ENCODE measurements at regions of chr5 and their contacts with region 1.

Region 1: DNA sequence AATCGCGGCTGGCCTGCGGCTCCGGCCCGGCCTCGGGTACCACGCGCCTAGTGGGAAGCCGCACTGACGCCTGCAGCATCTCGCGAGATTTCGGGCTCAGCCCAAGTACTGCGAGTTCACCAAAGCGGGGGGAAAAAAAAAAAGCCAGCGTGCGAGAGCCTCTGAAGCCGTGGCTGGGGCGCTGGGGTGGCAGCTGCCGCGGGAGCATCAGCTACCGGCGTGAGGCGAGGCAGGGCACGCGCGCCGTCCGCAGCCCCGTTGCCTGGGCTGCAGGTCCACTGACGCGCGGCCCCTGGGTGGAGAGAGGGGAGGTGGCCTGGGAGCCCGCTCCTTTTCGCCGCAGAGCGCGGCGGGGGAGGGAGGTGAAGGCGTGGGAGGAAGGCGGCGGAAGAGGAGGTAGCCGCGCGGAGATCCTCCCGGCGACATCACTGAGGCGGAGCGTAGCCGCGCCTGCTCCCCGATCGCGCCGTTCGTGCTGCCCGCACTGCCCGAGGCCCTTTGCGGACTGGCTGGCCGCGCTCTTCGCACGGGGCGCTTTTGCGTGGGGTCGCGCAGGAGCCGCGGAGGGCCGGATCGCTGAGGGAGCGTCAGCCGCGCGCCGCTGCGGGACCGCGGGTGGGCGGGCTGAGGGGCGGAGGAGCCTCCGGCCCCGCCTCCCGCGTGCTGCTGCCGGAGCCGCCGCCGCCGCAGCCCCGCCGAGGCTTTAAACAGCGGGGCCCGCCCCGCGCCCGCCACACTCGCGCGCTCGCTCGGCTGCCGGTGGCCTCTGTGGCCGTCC is at the start of gene SLC12A2:
- DNase-seq: peak; percentile 98
- H3K4me3 Mint-ChIP-seq: peak within 1 kb of the TSS; percentile 94
- H3K27ac Mint-ChIP-seq: peak within 1 kb of the TSS; percentile 66
- H3K4me1 Mint-ChIP-seq: peaks cover 54% of the 10 kb centered on the region
- H3K27me3 Mint-ChIP-seq: no peaks in the 10 kb centered on the region
- CTCF ChIP-seq: no peak
- total RNA-seq, gene SLC12A2: 26.8 and 29.8 TPM in 2 replicates

Region 2: DNA sequence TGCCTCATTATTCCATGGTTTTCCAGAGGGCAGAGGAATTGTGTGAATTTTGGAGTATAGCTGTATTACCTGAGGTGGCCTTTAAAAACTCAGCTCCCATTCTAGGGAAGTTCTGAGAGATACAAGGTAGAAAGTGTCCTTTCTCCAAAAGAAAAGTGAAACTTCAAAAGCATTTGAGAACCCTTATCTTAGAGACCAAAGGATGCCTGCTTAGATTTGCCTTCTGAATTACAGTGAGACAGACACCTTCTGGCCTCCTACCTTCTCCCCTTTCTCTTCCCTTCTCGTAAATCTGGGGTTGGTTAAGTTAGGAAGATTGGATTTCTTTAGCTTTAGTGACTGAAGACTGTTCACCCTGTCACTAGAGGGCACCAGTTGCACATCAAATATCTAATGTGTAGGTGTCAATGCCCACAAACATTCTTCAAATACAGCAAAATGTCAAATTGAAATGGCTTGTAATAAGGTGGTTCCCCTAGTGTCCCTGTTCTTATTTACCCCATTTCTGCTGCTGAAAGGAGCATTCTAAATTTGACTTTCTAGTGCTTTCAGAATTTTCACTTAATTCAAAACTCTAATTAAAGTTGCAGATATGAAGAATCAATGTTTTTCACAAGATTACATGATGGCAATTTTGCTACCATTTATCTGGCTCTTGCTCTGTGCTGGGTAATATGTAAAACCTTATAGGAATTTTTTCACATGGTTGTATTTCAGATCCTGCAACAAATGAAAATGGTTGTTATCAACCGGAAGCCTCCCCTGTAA is 519.0 kb before region 1 on chr5:
- CTCF ChIA-PET with region 1: interaction called, 4 read pairs
- POLR2A ChIA-PET with region 1: no interaction called
- intact Hi-C with region 1: loop called (anchors 1 kb)
- DNase-seq: peak; percentile 89
- H3K4me3 Mint-ChIP-seq: no peak overlapping the region
- H3K27ac Mint-ChIP-seq: no peak overlapping the region
- H3K4me1 Mint-ChIP-seq: peaks cover 5% of the 10 kb centered on the region
- H3K27me3 Mint-ChIP-seq: peaks cover 10% of the 10 kb centered on the region
- CTCF ChIP-seq: peak; percentile 77

Region 3: DNA sequence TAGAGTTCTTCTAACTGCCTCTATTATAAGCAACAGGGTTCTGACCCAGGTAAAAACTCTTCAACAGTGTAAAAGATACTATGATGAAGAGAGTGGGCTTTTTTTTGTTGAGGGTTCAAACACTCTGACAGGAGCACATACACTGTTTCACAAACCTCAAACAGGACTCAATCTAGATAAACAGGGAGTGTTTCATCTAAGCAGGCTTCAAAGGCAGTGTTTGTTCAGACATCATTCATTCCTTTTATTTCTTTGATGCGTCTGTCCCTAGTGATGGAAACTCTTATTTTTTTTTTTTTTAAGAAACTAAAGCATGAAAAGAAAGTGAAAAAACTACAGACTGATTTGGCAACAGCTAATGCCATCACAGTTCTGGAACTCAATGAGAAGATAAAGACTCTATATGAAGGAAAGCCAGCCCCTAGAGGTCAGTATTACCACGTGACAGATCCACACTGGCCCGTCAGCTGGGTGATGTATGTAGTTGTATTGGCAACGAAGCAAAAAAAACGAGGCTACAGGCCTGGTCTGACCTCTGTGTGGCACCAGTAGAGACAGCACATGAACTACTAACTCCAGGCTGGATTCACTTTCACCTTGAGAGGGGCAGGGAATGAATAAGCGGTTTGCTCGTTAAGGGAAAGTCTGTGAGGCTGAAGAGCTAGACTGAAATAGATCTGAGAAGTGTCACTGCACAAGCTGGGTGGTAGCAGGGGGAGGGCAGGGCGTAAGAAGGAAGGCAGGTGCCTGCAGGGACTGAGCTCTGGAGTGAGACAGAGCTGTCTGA is 207.8 kb before region 1 on chr5:
- CTCF ChIA-PET with region 1: interaction called, 8 read pairs
- POLR2A ChIA-PET with region 1: interaction called, 16 read pairs
- intact Hi-C with region 1: loop called (anchors 1 kb)
- DNase-seq: peak; percentile 86
- H3K4me3 Mint-ChIP-seq: no peak overlapping the region
- H3K27ac Mint-ChIP-seq: peak overlapping the region; percentile 47
- H3K4me1 Mint-ChIP-seq: peaks cover 24% of the 10 kb centered on the region
- H3K27me3 Mint-ChIP-seq: no peaks in the 10 kb centered on the region
- CTCF ChIP-seq: peak; percentile 58

Region 4: DNA sequence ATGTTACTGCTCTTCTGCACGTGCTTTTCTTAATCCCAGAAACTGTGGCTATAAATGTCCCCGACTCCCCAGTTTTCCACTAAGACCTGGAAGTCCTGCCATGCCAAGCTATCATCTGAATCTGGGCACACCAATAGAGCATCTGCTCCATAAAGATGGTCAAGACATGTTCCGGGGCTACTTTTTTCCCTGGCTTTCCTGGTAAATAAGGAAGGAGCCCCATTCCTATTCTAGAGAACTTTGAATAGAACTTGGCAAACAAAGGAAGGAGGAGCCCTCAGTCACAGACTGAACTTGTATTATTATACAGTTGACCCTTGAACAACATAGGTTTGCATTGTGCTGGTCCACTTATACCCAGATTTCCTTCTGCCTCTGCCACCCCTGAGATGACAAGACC is 197.1 kb before region 1 on chr5:
- CTCF ChIA-PET with region 1: no interaction called
- POLR2A ChIA-PET with region 1: no interaction called
- intact Hi-C with region 1: no loop called
- DNase-seq: no peak
- H3K4me3 Mint-ChIP-seq: no peak overlapping the region
- H3K27ac Mint-ChIP-seq: no peak overlapping the region
- H3K4me1 Mint-ChIP-seq: no peaks in the 10 kb centered on the region
- H3K27me3 Mint-ChIP-seq: no peaks in the 10 kb centered on the region
- CTCF ChIP-seq: no peak

Region 5: DNA sequence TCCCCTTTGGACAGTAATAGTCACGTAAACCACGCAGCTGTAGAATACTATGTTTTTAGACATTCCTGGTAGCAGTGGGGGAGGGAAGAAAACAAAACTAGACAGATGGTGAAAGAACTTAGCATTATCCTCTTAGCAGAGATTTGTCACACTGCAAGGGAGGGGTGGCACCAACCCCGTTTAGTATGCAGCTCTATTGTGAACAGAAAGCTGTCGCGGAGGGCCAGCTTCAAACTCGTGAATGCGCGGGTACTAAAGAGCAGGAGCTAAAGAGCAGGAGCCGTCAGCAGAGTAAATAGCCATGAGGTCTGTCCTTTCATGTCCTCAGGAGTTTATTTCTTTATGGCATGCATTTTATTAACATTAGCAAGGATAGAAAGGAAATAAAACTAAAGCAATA is 141.6 kb before region 1 on chr5:
- CTCF ChIA-PET with region 1: no interaction called
- POLR2A ChIA-PET with region 1: no interaction called
- intact Hi-C with region 1: no loop called
- DNase-seq: no peak
- H3K4me3 Mint-ChIP-seq: no peak overlapping the region
- H3K27ac Mint-ChIP-seq: no peak overlapping the region
- H3K4me1 Mint-ChIP-seq: peaks cover 7% of the 10 kb centered on the region
- H3K27me3 Mint-ChIP-seq: no peaks in the 10 kb centered on the region
- CTCF ChIP-seq: no peak

Region 6: GRCh38 chr5:127959152-127959764 is 124.0 kb before region 1 on chr5:
- CTCF ChIA-PET with region 1: interaction called, 3 read pairs
- POLR2A ChIA-PET with region 1: interaction called, 12 read pairs
- intact Hi-C with region 1: loop called (anchors 1 kb)
- DNase-seq: peak; percentile 97
- H3K4me3 Mint-ChIP-seq: no peak overlapping the region
- H3K27ac Mint-ChIP-seq: peak overlapping the region; percentile 25
- H3K4me1 Mint-ChIP-seq: peaks cover 37% of the 10 kb centered on the region
- H3K27me3 Mint-ChIP-seq: no peaks in the 10 kb centered on the region
- CTCF ChIP-seq: no peak

Region 7: DNA sequence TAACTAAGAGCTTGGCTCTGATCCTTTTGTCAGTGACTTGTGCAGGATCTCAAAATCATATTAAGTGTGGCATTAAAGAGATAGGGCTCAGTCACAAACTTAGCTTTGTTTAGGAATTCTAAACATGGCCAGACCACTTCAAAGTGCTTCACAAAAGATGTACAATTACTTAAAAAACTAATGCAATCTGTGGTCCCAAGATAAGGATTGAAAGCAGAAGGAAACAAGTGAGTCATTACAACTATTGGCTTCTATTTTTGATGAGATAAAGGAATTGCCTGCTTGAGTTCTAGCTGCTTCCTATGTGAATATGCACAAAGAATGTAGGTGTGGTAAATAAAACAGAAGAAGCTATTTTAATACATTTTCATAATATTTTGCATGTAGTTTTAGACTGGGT is 44.6 kb before region 1 on chr5:
- CTCF ChIA-PET with region 1: interaction called, 15 read pairs
- POLR2A ChIA-PET with region 1: interaction called, 32 read pairs
- intact Hi-C with region 1: loop called (anchors 2 kb)
- DNase-seq: peak; percentile 32
- H3K4me3 Mint-ChIP-seq: no peak overlapping the region
- H3K27ac Mint-ChIP-seq: no peak overlapping the region
- H3K4me1 Mint-ChIP-seq: peaks cover 41% of the 10 kb centered on the region
- H3K27me3 Mint-ChIP-seq: no peaks in the 10 kb centered on the region
- CTCF ChIP-seq: no peak

Region 8: DNA sequence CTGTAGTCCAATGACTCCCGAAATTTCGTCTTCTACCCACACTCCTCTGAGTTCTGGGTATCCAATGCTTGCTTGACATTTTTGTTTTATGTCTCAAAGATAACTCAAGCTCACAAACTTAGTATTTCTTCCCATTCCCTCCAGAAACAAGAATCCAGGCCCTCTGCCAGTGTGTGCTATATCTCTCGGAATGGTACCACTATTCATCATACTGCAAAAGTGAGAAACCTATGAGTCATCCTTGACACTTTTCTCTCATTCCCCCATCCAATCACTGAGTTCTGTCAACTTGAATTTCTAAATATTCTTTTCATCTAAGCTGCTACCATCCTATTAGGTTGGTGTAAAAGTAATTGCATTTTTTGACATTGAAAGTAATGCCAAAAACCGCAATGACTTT is 10.1 kb after region 1 on chr5:
- CTCF ChIA-PET with region 1: interaction called, 5 read pairs
- POLR2A ChIA-PET with region 1: interaction called, 17 read pairs
- intact Hi-C with region 1: no loop called
- DNase-seq: peak; percentile 28
- H3K4me3 Mint-ChIP-seq: no peak overlapping the region
- H3K27ac Mint-ChIP-seq: no peak overlapping the region
- H3K4me1 Mint-ChIP-seq: peaks cover 12% of the 10 kb centered on the region
- H3K27me3 Mint-ChIP-seq: no peaks in the 10 kb centered on the region
- CTCF ChIP-seq: no peak

Region 9: DNA sequence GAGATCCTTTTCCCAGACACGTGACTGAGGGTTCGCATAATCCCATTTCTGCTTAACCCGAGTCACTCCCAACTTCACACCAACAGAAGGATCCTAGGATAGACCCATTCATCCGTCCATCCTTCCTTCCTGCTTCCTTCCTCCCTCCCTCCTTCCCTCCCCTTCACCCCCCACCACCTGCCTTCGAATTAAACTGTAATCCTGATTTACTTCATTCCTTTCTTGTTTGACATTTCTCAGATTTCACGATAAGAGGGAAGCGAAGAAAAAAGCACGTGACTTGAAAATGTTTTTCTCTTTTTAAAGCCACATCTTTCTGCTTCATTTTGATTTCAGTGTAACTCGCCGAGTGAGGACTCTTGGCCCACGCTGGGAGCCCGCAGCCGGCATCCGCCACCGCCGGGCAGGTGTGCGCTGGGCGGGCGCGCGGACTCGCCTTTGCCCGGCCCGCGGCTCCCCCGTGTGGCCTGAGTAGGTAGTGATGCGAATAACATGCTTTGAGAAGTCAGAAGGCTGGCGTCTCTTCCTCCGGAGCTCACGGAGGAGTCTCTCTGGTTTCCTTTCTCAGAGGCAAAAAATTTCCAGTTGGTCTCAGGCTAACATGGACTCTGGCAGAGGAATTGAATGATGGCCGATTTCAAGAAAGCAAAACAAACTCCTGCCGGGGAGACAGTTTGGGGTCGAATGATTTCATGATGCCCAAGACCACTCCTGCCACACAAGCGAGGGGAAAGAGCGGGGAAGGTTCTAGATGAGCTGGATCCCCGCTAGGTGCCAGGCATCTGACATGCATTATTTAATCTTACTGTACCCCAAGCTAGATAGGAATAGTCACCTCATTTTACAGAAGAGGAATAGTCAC is 118.1 kb after region 1 on chr5:
- CTCF ChIA-PET with region 1: interaction called, 7 read pairs
- POLR2A ChIA-PET with region 1: interaction called, 5 read pairs
- intact Hi-C with region 1: loop called (anchors 2 kb)
- DNase-seq: peak; percentile 81
- H3K4me3 Mint-ChIP-seq: peak overlapping the region; percentile 42
- H3K27ac Mint-ChIP-seq: no peak overlapping the region
- H3K4me1 Mint-ChIP-seq: peaks cover 21% of the 10 kb centered on the region
- H3K27me3 Mint-ChIP-seq: no peaks in the 10 kb centered on the region
- CTCF ChIP-seq: peak; percentile 95

Measured in MCF 10A (cell line).